ENCODE measurements at regions of chr1 and their contacts with region 1.

Region 1: GRCh38 chr1:154558575-154559465 is at the start of gene UBE2Q1:
- DNase-seq: peak; percentile 100
- ATAC-seq: peak; percentile 95
- H3K4me3 Mint-ChIP-seq: peak within 1 kb of the TSS; percentile 93
- H3K27ac Mint-ChIP-seq: peak within 1 kb of the TSS; percentile 96
- H3K4me1 Mint-ChIP-seq: peaks cover 20% of the 10 kb centered on the region
- H3K27me3 Mint-ChIP-seq: no peaks in the 10 kb centered on the region
- total RNA-seq, gene UBE2Q1: 89.3 to 101 TPM

Region 2: DNA sequence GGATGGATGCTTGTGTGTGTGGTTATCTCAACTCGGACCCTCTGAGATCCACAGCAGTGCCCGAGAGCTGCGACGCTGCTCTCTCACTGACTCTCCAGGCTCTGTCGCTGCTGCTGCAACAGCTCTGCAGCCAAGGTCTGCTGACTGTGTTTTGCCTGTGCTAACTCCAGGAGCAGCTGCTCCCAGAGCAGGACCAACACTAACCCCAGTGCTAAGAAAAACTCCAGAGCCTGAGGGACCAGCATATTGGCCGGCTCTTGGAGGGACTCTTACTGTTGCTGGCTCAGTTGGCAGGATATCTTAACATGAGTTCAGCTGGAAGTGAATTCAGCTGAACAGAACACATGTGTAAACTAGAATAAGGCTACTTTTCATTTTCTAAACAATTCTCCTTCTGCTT is 1879.4 kb before region 1 on chr1:
- CTCF ChIA-PET with region 1: no interaction called
- POLR2A ChIA-PET with region 1: no interaction called
- intact Hi-C with region 1: no loop called
- DNase-seq: no peak
- ATAC-seq: no peak
- H3K4me3 Mint-ChIP-seq: no peak overlapping the region
- H3K27ac Mint-ChIP-seq: no peak overlapping the region
- H3K4me1 Mint-ChIP-seq: no peaks in the 10 kb centered on the region
- H3K27me3 Mint-ChIP-seq: peaks cover 20% of the 10 kb centered on the region

Region 3: DNA sequence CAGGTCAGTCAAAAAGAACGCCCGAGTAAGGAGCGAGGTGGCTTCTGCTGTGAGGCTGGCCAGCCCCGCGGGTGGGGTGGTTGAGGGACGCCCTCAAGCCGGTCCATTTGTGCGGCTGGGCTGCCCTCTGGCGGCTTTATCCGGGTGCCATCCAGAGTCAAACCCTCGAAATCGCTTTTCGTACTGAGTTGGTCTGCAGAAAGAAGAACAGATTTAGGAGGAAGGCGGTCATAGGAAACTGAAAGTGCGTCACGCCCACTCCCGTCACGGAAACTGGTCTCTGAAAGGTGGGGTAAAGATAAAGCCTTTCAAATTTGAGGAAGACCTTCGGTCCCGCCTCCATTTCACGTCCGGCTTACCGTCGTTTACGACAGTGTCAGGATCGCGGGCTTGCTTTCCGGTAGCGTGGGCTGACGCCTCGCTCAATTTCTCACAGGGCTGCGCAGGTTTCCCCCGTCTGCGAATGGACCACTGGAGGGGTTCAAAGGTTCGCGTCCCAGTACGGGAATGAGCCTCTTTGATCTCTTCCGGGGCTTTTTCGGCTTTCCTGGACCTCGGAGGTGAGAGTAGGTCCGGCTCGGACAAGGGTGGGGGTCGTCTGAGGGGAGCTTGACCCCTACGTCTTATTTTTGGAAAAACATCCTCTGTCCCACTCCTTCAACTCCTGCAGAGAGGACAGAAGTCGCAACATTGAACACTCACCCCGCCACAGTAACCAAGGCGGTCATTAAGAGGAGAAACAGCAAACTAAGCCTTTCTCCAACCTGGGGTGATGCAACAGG is 286.4 kb before region 1 on chr1 and contains the start of gene HAX1:
- CTCF ChIA-PET with region 1: no interaction called
- POLR2A ChIA-PET with region 1: no interaction called
- intact Hi-C with region 1: loop called in 1 of 2 experiments (anchors 1 kb)
- DNase-seq: peak; percentile 99
- ATAC-seq: peak; percentile 95
- H3K4me3 Mint-ChIP-seq: peak within 1 kb of the TSS; percentile 99
- H3K27ac Mint-ChIP-seq: peak within 1 kb of the TSS; percentile 99
- H3K4me1 Mint-ChIP-seq: peaks cover 37% of the 10 kb centered on the region
- H3K27me3 Mint-ChIP-seq: no peaks in the 10 kb centered on the region
- total RNA-seq, gene HAX1: 177 to 225 TPM

Region 4: DNA sequence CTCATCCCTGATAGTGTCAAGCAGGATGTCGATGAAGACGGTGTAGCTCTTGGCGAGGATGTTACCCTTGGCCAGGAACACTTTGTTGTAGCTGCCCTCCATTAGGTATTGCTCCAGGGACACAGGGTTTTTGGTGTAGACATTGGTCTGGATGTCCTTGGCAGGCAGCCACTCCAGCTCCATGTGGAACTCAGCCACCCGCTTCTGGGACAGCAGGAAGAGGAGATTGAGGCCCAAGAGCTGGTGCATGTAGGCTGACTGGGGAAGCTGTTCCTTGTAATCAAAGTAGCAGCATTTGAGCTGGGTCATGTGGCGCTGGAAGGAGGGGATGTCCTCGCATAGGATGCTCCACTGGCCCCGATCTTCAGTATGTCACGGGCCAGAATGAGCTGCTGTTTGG is 144.2 kb before region 1 on chr1:
- CTCF ChIA-PET with region 1: no interaction called
- POLR2A ChIA-PET with region 1: no interaction called
- intact Hi-C with region 1: no loop called
- DNase-seq: no peak
- ATAC-seq: no peak
- H3K4me3 Mint-ChIP-seq: no peak overlapping the region
- H3K27ac Mint-ChIP-seq: peak overlapping the region; percentile 26
- H3K4me1 Mint-ChIP-seq: peaks cover 81% of the 10 kb centered on the region
- H3K27me3 Mint-ChIP-seq: no peaks in the 10 kb centered on the region

Region 5: DNA sequence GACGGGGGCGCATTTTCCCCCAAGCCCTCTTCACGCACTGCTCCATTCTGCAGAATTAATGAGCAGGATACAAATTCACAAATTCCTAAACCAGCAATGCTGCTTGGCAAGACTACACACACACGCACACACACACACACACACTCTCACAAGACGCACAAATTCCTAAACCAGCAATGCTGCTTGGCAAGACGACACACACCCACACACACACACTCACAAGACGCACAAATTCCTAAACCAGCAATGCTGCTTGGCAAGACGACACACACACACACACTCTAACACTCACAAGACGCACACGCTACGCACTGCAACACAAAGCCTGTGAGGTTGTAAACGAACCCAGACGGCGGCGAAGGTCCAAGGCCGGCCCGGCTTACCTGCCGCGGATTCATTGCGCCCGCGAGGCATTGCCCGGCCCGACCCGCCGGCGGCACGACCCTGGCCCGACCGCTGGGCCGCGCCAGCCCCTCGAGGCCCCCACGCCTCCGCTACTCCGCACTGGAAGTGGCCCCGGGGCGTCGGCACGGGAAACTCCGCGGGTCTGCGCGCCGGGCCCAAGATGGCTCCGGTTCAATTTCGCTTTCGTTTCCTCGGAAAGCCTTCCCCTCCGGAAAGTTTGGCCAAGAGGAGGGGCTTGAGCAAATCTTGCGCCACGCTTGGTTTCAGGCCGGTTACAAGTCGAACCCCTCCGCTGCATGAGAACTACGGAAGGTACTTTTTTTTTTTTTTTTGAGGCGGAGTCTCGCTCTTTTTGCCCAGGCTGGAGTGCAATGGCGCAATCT is 49.0 kb after region 1 on chr1 and contains the start of gene ADAR:
- CTCF ChIA-PET with region 1: no interaction called
- POLR2A ChIA-PET with region 1: interaction called, 3 read pairs
- intact Hi-C with region 1: loop called (anchors 1 kb)
- DNase-seq: peak; percentile 95
- ATAC-seq: peak; percentile 69
- H3K4me3 Mint-ChIP-seq: peak within 1 kb of the TSS; percentile 95
- H3K27ac Mint-ChIP-seq: peak within 1 kb of the TSS; percentile 99
- H3K4me1 Mint-ChIP-seq: peaks cover 75% of the 10 kb centered on the region
- H3K27me3 Mint-ChIP-seq: no peaks in the 10 kb centered on the region
- total RNA-seq, gene ADAR: 310 to 332 TPM

Region 6: GRCh38 chr1:154747740-154748404 is 189.1 kb after region 1 on chr1:
- CTCF ChIA-PET with region 1: interaction called, 7 read pairs
- POLR2A ChIA-PET with region 1: no interaction called
- intact Hi-C with region 1: loop called in 1 of 2 experiments (anchors 1 kb)
- DNase-seq: peak; percentile 80
- ATAC-seq: peak; percentile 78
- H3K4me3 Mint-ChIP-seq: peak overlapping the region; percentile 80
- H3K27ac Mint-ChIP-seq: peak overlapping the region; percentile 98
- H3K4me1 Mint-ChIP-seq: peaks cover 80% of the 10 kb centered on the region
- H3K27me3 Mint-ChIP-seq: no peaks in the 10 kb centered on the region

Region 7: DNA sequence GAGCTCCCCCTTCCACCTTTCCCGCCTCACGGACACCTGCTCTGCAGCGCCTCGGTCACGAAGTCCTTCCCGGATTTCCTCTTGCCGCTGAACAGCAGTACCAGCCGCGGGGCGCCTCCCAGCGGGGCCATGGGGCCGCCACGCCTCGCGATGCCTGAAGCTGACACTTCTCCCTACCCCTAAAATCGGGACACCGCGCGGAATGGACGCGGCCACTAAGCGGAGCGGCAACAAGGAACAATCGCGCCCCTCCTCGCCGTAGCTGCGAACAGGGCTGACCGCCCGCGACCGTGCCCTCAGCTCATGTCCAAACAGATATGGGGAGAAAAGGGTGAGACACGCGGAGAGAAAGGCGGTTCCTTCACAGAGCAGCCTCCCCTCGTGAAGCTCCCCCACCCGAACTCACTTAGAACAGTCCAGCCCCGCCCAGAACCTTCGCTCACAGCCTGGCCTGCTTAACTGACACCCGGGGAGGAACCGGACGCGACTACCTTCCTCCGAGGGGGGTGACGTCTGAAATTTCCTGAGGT is 377.8 kb after region 1 on chr1 and contains the start of gene PMVK:
- CTCF ChIA-PET with region 1: interaction called, 16 read pairs
- POLR2A ChIA-PET with region 1: interaction called, 6 read pairs
- intact Hi-C with region 1: loop called in 1 of 2 experiments (anchors 1 kb)
- DNase-seq: peak; percentile 97
- ATAC-seq: peak; percentile 80
- H3K4me3 Mint-ChIP-seq: peak within 1 kb of the TSS; percentile 95
- H3K27ac Mint-ChIP-seq: peak within 1 kb of the TSS; percentile 96
- H3K4me1 Mint-ChIP-seq: peaks cover 54% of the 10 kb centered on the region
- H3K27me3 Mint-ChIP-seq: no peaks in the 10 kb centered on the region
- total RNA-seq, gene PMVK: 17.0 to 36.9 TPM

Region 8: DNA sequence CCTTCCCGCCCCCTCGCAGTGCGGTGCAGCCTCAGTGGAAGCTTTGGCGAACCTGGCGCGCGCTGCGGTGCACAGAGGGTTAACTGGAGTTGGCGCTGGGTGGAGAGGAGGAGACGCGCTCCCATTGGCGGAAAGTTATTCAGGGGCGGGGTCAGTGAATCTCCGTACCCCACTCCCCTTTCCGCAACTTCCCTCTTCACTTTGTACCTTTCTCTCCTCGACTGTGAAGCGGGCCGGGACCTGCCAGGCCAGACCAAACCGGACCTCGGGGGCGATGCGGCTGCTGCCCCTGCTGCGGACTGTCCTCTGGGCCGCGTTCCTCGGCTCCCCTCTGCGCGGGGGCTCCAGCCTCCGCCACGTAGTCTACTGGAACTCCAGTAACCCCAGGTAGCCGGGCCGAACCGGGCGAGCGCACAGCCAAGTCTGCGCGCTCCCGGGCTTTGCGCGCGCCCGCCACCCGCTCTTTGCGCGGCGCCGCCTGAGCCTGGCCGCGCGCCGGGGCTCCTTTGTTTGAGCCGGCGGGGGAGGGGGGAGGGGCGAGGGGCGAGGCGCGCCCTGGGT is 504.8 kb after region 1 on chr1 and contains the start of gene EFNA4:
- CTCF ChIA-PET with region 1: interaction called, 6 read pairs
- POLR2A ChIA-PET with region 1: no interaction called
- intact Hi-C with region 1: loop called in 1 of 2 experiments (anchors 1 kb)
- DNase-seq: peak; percentile 92
- ATAC-seq: peak; percentile 87
- H3K4me3 Mint-ChIP-seq: peak within 1 kb of the TSS; percentile 83
- H3K27ac Mint-ChIP-seq: peak within 1 kb of the TSS; percentile 72
- H3K4me1 Mint-ChIP-seq: peaks cover 31% of the 10 kb centered on the region
- H3K27me3 Mint-ChIP-seq: no peaks in the 10 kb centered on the region
- total RNA-seq, gene EFNA4: 6.3 to 6.5 TPM

Measured in activated CD4-positive, alpha-beta T cell treated with anti-CD3 and anti-CD28 coated beads for 36 hours (primary cell).